Activated T-helper 2 cell treated with anti-CD3 and anti-CD28 coated beads, Interferon-gamma antibody, Interleukin-2, Interleukin-4, amounts not matched to agents 10 μg/mL and 5 μg/mL and 100 μg/mL, durations not matched to agents 14 hours and 24 hours and 36 hours (primary cell): ENCODE measurements at regions of chr3 and their contacts with region 1.

Region 1: GRCh38 chr3:188914552-188914951 is 257.2 kb upstream of the TPRG1 start:
- DNase-seq: no peak
- H3K4me3 Mint-ChIP-seq: no peak overlapping the region
- H3K27ac Mint-ChIP-seq: peak overlapping the region; percentile 83
- H3K4me1 Mint-ChIP-seq: peaks cover 42% of the 10 kb centered on the region
- H3K27me3 Mint-ChIP-seq: peaks cover 3% of the 10 kb centered on the region

Region 2: GRCh38 chr3:187802928-187803259 is 1111.7 kb before region 1 on chr3:
- intact Hi-C with region 1: loop called (anchors 5 kb)
- DNase-seq: peak; percentile 80
- H3K4me3 Mint-ChIP-seq: peak overlapping the region; percentile 54
- H3K27ac Mint-ChIP-seq: peak overlapping the region; percentile 87
- H3K4me1 Mint-ChIP-seq: peaks cover 90% of the 10 kb centered on the region
- H3K27me3 Mint-ChIP-seq: no peaks in the 10 kb centered on the region

Region 3: DNA sequence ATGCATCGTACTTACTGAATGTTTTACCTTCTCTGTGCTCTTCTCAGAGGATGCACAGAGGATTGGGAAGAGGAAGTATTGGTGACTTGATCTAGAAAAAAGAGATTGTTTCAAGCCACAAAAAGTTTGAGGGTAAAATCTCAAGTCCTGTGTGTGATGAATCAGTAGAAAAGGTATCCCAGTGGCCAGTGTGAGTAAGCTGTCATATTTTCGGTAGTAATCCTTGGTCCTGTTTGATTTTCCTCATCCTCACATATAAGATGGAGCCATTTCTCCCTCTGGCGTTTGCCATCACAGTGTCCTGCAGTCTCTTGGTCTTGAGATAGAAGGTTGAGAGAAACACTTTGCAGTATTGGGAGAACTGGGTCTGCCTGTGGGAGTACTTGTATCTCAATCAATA is 593.8 kb before region 1 on chr3:
- intact Hi-C with region 1: loop called (anchors 5 kb)
- DNase-seq: no peak
- H3K4me3 Mint-ChIP-seq: no peak overlapping the region
- H3K27ac Mint-ChIP-seq: no peak overlapping the region
- H3K4me1 Mint-ChIP-seq: peaks cover 50% of the 10 kb centered on the region
- H3K27me3 Mint-ChIP-seq: peaks cover 7% of the 10 kb centered on the region

Region 4: GRCh38 chr3:188697127-188697526 is 217.4 kb before region 1 on chr3:
- intact Hi-C with region 1: loop called (anchors 5 kb)
- DNase-seq: no peak
- H3K4me3 Mint-ChIP-seq: no peak overlapping the region
- H3K27ac Mint-ChIP-seq: no peak overlapping the region
- H3K4me1 Mint-ChIP-seq: peaks cover 30% of the 10 kb centered on the region
- H3K27me3 Mint-ChIP-seq: peaks cover 2% of the 10 kb centered on the region

Region 5: DNA sequence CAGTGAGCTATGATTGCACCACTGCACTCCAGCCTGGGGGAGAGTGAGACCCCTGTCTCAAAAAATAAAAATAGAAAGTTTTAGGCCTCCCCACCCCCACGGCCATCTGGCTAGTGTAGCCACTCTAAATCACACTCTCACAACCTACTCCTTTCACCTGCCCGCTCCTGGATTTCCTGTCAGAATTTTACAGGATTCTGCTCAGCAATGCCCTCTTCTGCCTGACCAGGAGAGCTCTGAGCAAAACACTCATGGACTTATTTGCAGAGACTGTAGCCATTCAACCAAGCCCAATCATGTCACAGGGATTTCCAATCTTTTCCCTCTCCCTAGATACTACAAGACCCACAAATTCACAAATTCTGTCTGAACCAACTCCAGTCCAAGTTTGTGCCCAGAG is 14.6 kb after region 1 on chr3:
- intact Hi-C with region 1: no loop called
- DNase-seq: no peak
- H3K4me3 Mint-ChIP-seq: no peak overlapping the region
- H3K27ac Mint-ChIP-seq: no peak overlapping the region
- H3K4me1 Mint-ChIP-seq: no peaks in the 10 kb centered on the region
- H3K27me3 Mint-ChIP-seq: peaks cover 6% of the 10 kb centered on the region

Region 6: GRCh38 chr3:188947401-188948280 is 33.1 kb after region 1 on chr3:
- intact Hi-C with region 1: loop called (anchors 2 kb)
- DNase-seq: no peak
- H3K4me3 Mint-ChIP-seq: no peak overlapping the region
- H3K27ac Mint-ChIP-seq: no peak overlapping the region
- H3K4me1 Mint-ChIP-seq: peaks cover 39% of the 10 kb centered on the region
- H3K27me3 Mint-ChIP-seq: peaks cover 18% of the 10 kb centered on the region

Region 7: DNA sequence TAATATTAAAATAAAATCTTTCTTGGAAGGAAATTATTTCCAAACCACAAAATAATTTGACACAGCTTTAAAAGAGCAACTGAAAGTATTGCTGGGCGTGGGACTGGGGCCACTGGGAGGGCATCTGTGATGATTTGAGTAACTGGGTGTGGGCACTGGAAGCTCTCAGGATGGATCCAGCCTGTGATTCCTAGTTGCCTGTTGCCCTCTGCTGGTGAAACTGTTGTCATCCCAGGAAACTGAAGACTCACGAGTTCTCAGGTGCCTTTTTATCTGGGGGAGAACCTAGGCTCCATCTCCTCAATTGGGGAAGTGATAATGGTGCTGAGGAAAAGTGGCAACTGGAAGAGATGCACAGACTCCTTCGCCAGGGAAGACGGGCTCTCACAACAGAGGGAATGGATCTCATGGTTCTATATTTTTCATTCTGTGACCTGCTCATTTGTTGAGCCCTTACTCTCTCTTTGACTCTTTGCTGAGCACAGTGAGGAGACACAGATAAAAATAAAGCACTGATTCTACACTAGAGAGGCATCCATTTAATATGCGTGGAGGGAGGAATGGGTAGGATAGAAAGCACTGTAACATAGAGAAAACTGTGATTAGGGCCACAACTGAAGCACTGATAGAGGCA is 318.8 kb after region 1 on chr3:
- intact Hi-C with region 1: loop called (anchors 2 kb)
- DNase-seq: no peak
- H3K4me3 Mint-ChIP-seq: no peak overlapping the region
- H3K27ac Mint-ChIP-seq: no peak overlapping the region
- H3K4me1 Mint-ChIP-seq: peaks cover 48% of the 10 kb centered on the region
- H3K27me3 Mint-ChIP-seq: peaks cover 18% of the 10 kb centered on the region